Activated B cell treated with CpG ODN at 0.5 μM for 24 hours (primary cell): ENCODE measurements at regions of chr17 and their contacts with region 1.

Region 1: GRCh38 chr17:62968445-62968923 is 2.4 kb downstream of the TANC2 start:
- DNase-seq: no peak
- ATAC-seq: peak; percentile 57
- H3K4me3 Mint-ChIP-seq: peak overlapping the region; percentile 60
- H3K27ac Mint-ChIP-seq: no peak overlapping the region
- H3K4me1 Mint-ChIP-seq: peaks cover 25% of the 10 kb centered on the region
- H3K27me3 Mint-ChIP-seq: peaks cover 1% of the 10 kb centered on the region
- CTCF ChIP-seq: peak; percentile 63

Region 2: DNA sequence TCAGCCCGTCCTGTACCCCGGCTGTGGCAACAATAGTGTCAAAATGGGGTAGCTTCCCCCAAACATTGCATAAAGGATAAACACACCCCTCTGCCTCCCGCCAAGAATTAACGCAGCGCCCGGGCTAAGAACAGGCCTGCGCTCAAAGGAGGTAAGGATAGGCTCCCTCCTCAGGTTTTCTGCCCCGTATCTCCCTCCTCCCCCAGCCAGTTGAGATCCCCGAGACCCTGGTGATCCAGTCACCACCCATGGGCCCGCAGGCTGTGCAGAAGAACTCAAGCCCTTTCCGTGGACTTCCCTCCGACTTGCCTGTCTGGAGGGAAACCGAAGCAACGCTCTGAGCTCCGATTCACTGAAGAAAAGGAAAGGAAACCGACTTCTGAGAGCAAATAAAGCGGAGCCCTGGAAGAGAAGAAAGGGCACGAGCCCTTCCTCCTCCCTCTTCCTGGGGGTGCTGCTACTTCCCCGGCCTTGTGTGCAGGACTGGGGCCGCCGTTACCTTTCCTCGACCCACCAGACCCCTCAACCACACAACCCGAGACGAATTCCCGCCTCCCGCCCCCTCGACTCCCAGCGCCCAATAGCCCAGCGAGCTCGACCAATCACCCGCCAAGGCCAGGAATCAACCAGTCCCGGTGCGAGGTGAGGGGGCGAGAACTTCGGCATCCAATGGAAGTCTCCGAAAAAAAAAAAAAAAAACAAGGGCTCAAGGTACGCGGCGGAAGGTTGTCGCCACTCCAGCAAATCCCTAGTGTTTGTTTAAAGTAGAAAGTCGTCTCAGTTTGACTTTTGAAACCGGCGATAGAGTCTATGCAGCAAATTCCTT is 1105.3 kb before region 1 on chr17 and contains the start of gene BRIP1:
- CTCF ChIA-PET with region 1: no interaction called
- POLR2A ChIA-PET with region 1: no interaction called
- intact Hi-C with region 1: loop called (anchors 5 kb)
- DNase-seq: peak; percentile 70
- ATAC-seq: peak; percentile 99
- H3K4me3 Mint-ChIP-seq: peak within 1 kb of the TSS; percentile 94
- H3K27ac Mint-ChIP-seq: peak within 1 kb of the TSS; percentile 83
- H3K4me1 Mint-ChIP-seq: peaks cover 18% of the 10 kb centered on the region
- H3K27me3 Mint-ChIP-seq: no peaks in the 10 kb centered on the region
- CTCF ChIP-seq: no peak
- total RNA-seq, gene BRIP1: 2.0 and 2.5 TPM in 2 replicates

Region 3: DNA sequence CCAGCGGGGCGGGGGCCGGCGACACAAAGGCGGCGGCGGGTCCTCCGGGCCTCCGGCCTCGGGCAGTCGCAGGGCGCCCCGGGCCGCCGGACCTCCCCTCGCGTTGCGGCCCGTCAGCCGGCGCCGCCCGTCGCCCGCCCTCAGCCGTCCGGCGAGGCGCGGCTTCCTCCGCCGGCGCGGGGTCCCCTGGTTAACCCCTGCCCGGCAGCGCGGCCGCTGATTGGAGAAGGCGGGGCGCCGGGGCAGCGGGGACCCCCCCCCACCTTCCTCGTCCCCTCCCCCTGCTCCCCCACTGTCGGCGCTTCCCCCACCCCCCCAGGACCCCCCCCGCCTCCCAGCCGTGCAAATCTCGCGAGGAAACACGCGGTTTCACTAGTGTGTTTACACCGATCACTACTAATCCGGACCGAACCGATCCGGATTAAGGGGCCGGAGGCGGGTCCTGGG is 490.0 kb before region 1 on chr17 and contains the start of gene TLK2:
- CTCF ChIA-PET with region 1: no interaction called
- POLR2A ChIA-PET with region 1: no interaction called
- intact Hi-C with region 1: loop called (anchors 10 kb)
- DNase-seq: peak; percentile 77
- ATAC-seq: peak; percentile 82
- H3K4me3 Mint-ChIP-seq: peak within 1 kb of the TSS; percentile 86
- H3K27ac Mint-ChIP-seq: peak within 1 kb of the TSS; percentile 90
- H3K4me1 Mint-ChIP-seq: peaks cover 39% of the 10 kb centered on the region
- H3K27me3 Mint-ChIP-seq: no peaks in the 10 kb centered on the region
- CTCF ChIP-seq: no peak
- total RNA-seq, gene TLK2: 54.6 and 57.0 TPM in 2 replicates

Region 4: GRCh38 chr17:62671583-62672312 is 296.7 kb before region 1 on chr17:
- CTCF ChIA-PET with region 1: interaction called, 7 read pairs
- POLR2A ChIA-PET with region 1: no interaction called
- intact Hi-C with region 1: loop called (anchors 1 kb)
- DNase-seq: no peak
- ATAC-seq: no peak
- H3K4me3 Mint-ChIP-seq: no peak overlapping the region
- H3K27ac Mint-ChIP-seq: no peak overlapping the region
- H3K4me1 Mint-ChIP-seq: no peaks in the 10 kb centered on the region
- H3K27me3 Mint-ChIP-seq: no peaks in the 10 kb centered on the region
- CTCF ChIP-seq: no peak

Region 5: DNA sequence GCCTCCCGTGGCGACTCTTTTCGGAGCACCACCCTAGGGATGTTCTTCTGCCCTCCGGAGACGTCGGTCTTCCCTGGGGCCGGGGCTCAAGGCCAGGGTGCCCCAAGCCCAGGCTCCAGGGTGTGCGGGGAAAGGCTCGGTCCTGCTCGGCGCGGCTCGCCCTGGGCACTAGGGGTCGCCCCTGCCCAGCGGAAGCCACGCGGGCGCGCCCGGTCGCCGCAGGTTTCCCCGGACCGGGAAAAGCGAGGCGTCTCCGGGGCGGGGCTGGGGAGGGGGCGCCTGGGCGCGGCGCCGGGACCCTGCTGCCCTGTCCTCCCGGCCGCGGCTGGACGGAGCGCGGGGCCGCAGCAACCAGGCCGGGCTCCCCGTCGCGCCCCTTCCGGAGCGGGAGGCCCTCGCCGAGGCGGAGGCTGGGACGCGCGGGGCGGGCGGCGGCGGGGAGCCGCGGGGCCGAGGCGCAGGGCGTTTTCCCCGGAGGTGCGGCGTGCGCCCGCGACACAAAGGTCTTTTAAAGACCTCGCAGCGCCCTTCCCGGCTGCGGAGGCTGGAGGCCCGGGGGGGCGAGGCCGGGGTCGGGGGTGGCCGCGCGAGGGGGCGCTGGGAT is 264.6 kb before region 1 on chr17:
- CTCF ChIA-PET with region 1: interaction called, 3 read pairs
- POLR2A ChIA-PET with region 1: no interaction called
- intact Hi-C with region 1: loop called (anchors 1 kb)
- DNase-seq: peak; percentile 81
- ATAC-seq: peak; percentile 95
- H3K4me3 Mint-ChIP-seq: peak overlapping the region; percentile 60
- H3K27ac Mint-ChIP-seq: no peak overlapping the region
- H3K4me1 Mint-ChIP-seq: peaks cover 10% of the 10 kb centered on the region
- H3K27me3 Mint-ChIP-seq: peaks cover 11% of the 10 kb centered on the region
- CTCF ChIP-seq: no peak

Region 6: DNA sequence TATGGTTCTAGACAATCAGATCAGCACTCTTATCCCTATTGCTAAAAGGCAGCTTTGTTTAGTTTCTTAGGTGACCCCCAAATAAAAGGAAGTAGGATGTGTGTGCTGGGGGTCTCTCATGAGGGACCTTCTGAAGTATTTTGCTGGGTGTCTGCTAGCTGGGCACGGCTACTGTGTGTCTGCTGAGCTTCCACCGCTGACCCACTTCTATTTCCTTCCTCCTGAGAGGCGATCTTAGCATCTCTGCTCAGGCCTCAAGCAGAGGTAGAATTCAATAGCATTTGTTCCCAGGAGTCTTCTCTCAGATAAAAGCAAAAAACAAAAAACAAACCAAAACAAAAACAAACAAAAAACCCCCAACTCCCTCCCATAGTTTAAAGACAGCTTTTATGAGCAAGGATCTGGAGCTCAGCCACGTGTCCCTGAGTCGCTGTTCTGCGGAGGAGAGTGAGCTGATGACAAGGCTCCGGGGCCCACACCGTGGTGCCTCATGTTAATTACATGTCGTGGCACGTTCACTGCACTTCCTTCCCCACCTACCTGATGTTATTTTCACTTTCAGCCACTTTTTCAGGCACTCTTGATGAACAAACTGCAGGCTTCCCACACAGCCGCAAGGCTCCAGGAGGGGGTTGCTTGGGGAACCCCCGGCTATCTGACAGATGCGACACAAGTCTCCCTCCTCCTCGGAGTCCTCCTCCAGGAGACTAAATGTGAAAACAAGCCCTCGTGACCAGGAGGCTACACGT is 243.9 kb before region 1 on chr17:
- CTCF ChIA-PET with region 1: no interaction called
- POLR2A ChIA-PET with region 1: no interaction called
- intact Hi-C with region 1: loop called (anchors 1 kb)
- DNase-seq: peak; percentile 46
- ATAC-seq: peak; percentile 92
- H3K4me3 Mint-ChIP-seq: peak overlapping the region; percentile 75
- H3K27ac Mint-ChIP-seq: peak overlapping the region; percentile 91
- H3K4me1 Mint-ChIP-seq: peaks cover 60% of the 10 kb centered on the region
- H3K27me3 Mint-ChIP-seq: peaks cover 3% of the 10 kb centered on the region
- CTCF ChIP-seq: no peak

Region 7: DNA sequence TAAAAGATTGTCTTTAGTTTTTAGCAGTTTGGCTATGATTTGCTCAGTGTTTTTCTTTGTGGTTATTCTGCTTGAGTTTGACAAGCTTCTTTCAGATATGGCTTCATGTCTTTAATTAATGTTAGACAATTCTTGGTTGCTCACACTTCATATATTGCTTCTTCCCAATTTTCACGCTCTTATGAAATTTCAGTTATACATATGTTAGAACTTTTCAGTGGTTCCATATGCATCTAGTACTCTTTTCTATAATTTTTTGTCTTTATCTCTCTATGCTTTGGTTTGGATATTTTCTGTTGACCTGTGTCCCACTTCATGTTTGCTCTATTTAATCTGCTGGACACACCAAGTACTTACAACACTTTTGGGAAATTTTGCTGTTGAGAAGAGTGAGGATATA is 39.6 kb after region 1 on chr17:
- CTCF ChIA-PET with region 1: no interaction called
- POLR2A ChIA-PET with region 1: no interaction called
- intact Hi-C with region 1: no loop called
- DNase-seq: no peak
- ATAC-seq: no peak
- H3K4me3 Mint-ChIP-seq: no peak overlapping the region
- H3K27ac Mint-ChIP-seq: no peak overlapping the region
- H3K4me1 Mint-ChIP-seq: no peaks in the 10 kb centered on the region
- H3K27me3 Mint-ChIP-seq: no peaks in the 10 kb centered on the region
- CTCF ChIP-seq: no peak

Region 8: DNA sequence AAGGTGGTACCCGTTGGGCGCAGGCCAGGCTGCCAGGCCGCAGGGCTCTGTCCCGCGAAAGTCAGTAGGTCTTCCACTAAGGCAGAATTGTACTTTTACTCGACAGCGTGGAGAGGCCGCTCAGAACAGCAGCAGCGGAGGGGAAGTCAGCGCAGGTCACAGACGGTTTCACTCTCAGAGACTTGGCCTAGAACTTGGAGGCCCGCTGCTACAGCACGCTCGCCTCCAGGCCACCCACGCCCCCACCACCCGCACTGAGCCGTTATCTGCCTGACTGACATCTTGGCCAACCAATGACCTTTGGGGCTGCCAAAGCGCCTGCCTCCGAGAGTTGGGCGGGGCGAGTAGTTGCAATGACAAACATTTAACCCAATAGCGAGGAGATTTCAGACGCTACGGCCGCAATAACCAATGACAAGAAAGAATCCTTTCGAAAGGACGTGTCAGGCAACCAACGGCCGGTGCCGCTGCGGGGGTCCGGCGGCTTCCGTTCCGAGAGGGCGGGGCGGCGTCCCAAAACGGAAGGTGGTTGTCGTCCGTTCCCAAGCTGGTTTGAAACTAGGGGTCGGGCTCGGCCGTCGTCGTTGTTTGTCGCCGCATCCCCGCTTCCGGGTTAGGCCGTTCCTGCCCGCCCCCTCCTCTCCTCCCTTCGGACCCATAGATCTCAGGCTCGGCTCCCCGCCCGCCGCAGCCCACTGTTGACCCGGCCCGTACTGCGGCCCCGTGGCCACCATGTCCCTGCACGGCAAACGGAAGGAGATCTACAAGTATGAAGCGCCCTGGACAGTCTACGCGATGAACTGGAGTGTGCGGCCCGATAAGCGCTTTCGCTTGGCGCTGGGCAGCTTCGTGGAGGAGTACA is 581.7 kb after region 1 on chr17 and contains the start of gene DCAF7:
- CTCF ChIA-PET with region 1: no interaction called
- POLR2A ChIA-PET with region 1: no interaction called
- intact Hi-C with region 1: loop called (anchors 5 kb)
- DNase-seq: peak; percentile 94
- ATAC-seq: peak; percentile 94
- H3K4me3 Mint-ChIP-seq: peak within 1 kb of the TSS; percentile 99
- H3K27ac Mint-ChIP-seq: peak within 1 kb of the TSS; percentile 95
- H3K4me1 Mint-ChIP-seq: peaks cover 56% of the 10 kb centered on the region
- H3K27me3 Mint-ChIP-seq: no peaks in the 10 kb centered on the region
- CTCF ChIP-seq: no peak
- total RNA-seq, gene DCAF7: 91.9 and 103 TPM in 2 replicates